SK-N-SH (cell line): ENCODE measurements at regions of chr19 and their contacts with region 1.

Region 1: GRCh38 chr19:48588670-48589399 is 17.7 kb upstream of the SPACA4 start:
- DNase-seq: peak; percentile 92
- H3K4me3 ChIP-seq: peak overlapping the region; percentile 40 to 60
- H3K27ac ChIP-seq: no peak overlapping the region
- H3K4me1 ChIP-seq: no peaks in the 10 kb centered on the region; a peak in 1 of 4 replicates
- H3K27me3 ChIP-seq: no peaks in the 10 kb centered on the region
- CTCF ChIP-seq: peak; percentile 95
- EP300 ChIP-seq: no peak
- RAD21 ChIP-seq: peak; percentile 59

Region 2: GRCh38 chr19:48320028-48320541 is 268.8 kb before region 1 on chr19:
- CTCF ChIA-PET with region 1: interaction called, 16 read pairs
- POLR2A ChIA-PET with region 1: no interaction called
- DNase-seq: peak; percentile 67
- H3K4me3 ChIP-seq: no peak overlapping the region; a peak in 1 of 4 replicates
- H3K27ac ChIP-seq: no peak overlapping the region
- H3K4me1 ChIP-seq: peaks cover 12 to 24% of the 10 kb centered on the region in 2 experiments
- H3K27me3 ChIP-seq: no peaks in the 10 kb centered on the region
- CTCF ChIP-seq: peak; percentile 73
- EP300 ChIP-seq: no peak
- RAD21 ChIP-seq: peak; percentile 59

Region 3: DNA sequence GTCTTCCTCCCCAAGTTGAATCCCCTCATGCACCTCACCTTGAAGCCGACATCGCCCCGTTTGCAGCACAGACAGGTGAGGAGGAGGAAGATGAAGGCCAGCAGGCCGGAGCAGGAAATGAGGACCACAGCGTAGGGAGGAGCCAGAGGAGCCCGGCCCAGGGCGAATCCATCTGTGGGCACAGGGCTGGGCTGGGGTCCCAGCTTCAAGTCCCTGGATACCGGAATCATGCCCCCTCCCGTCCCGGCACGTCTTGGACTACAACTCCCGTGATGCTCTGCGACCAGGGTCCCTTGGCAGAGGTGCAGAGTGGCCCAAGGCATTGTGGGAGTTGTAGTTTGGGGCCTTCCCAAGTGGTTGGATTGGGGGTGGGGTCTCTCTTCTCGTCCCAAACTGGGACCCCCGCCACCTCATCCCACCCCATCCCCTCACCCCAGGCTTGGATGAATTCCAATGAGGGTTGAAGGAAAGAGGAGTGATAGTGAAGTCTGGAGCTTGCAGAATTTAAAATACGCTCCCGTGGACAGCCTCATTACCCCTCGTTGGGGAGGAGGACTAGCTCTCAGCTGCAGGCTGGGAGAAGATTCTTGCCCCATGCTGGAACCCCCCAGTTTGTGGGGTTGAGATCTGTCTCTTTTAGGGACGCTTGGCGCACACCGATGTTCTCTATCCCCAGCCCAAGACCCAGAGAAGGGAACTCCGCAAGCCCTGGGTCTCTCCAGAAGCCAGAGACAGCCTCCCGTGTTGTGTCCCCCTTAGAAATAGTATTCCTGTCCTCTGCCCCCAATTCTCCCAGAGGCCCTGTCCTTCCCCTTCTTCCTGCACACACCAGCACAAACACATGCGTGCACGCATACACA is 78.2 kb before region 1 on chr19:
- CTCF ChIA-PET with region 1: interaction called, 142 read pairs
- POLR2A ChIA-PET with region 1: no interaction called
- DNase-seq: peak; percentile 80
- H3K4me3 ChIP-seq: peak overlapping the region; percentile 59 to 77
- H3K27ac ChIP-seq: peak overlapping the region in 1 of 2 experiments; percentile 44; a peak in 1 of 4 replicates
- H3K4me1 ChIP-seq: peaks cover 0 to 22% of the 10 kb centered on the region in 2 experiments; a peak in 1 of 4 replicates
- H3K27me3 ChIP-seq: no peaks in the 10 kb centered on the region
- CTCF ChIP-seq: no peak
- EP300 ChIP-seq: no peak
- RAD21 ChIP-seq: no peak

Region 4: DNA sequence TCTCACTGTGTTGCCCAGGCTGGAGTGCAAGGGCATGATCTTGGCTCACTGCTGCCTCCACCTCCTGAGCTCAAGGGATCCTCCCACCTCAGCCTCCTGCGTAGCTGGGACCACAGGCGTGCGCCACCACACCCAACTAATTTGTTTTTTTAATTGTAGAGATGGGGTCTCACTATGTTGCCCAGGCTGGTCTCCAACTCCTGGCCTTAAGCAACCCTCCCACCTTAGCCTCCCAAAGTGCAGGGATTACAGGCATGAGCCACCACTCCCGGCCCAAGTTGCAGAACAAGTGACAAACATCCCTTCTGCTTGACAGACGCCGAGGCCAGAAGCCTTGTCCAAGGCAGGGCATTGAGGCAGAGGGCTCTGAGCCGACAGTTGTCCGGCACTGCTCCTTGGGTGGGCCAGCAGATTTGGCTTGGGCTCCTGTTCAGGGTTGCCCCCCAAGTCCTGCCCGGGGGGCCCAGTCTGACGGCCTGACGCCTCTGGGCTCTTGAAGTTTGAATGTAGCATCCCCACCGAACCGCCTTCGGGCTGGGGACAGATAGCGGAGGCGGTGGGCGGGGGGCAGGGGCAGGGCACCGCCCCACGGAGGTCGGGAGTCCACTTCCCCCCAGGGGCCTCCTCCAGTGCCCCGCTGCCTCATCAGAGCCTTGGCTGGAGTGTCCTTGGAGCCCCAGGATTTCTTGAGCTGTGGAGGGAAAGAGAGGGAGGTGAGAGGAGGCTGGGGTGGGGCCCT is 12.0 kb after region 1 on chr19:
- CTCF ChIA-PET with region 1: interaction called, 13 read pairs
- POLR2A ChIA-PET with region 1: no interaction called
- DNase-seq: no peak
- H3K4me3 ChIP-seq: no peak overlapping the region
- H3K27ac ChIP-seq: no peak overlapping the region
- H3K4me1 ChIP-seq: no peaks in the 10 kb centered on the region
- H3K27me3 ChIP-seq: no peaks in the 10 kb centered on the region; the same call in 1 of the 2 replicates
- CTCF ChIP-seq: no peak
- EP300 ChIP-seq: no peak
- RAD21 ChIP-seq: no peak

Region 5: GRCh38 chr19:48618916-48619691 is 30.3 kb after region 1 on chr19 and contains the starts of genes RPL18 and SPHK2:
- CTCF ChIA-PET with region 1: interaction called, 72 read pairs
- POLR2A ChIA-PET with region 1: no interaction called
- DNase-seq: peak; percentile 97
- H3K4me3 ChIP-seq: peak within 1 kb of the TSS; percentile 93 to 99
- H3K27ac ChIP-seq: peak within 1 kb of the TSS; percentile 74 to 92
- H3K4me1 ChIP-seq: peaks cover 15 to 41% of the 10 kb centered on the region in 2 experiments; a peak in 3 of 4 replicates
- H3K27me3 ChIP-seq: no peaks in the 10 kb centered on the region
- CTCF ChIP-seq: no peak
- EP300 ChIP-seq: peak; percentile 31 to 62; a peak in 1 of 4 replicates
- RAD21 ChIP-seq: 0 out of 2 replicates have a peak, but pooled peaks have one; percentile 14
- polyA plus RNA-seq, gene RPL18: 2,114 and 2,225 TPM in 2 replicates
- polyA plus RNA-seq, gene SPHK2: 14.1 and 14.8 TPM in 2 replicates

Region 6: GRCh38 chr19:48646001-48646721 is 57.3 kb after region 1 on chr19 and contains the start of gene CA11:
- CTCF ChIA-PET with region 1: no interaction called
- POLR2A ChIA-PET with region 1: no interaction called
- DNase-seq: peak; percentile 96
- H3K4me3 ChIP-seq: peak within 1 kb of the TSS; percentile 43 to 74
- H3K27ac ChIP-seq: peak within 1 kb of the TSS; percentile 54 to 69
- H3K4me1 ChIP-seq: peaks cover 4 to 6% of the 10 kb centered on the region in 2 experiments; a peak in 2 of 4 replicates
- H3K27me3 ChIP-seq: no peaks in the 10 kb centered on the region
- CTCF ChIP-seq: peak; percentile 76
- EP300 ChIP-seq: no peak
- RAD21 ChIP-seq: peak; percentile 90
- polyA plus RNA-seq, gene CA11: 13.1 and 13.5 TPM in 2 replicates